Activated B cell treated with CpG ODN at 0.5 μM for 24 hours (primary cell): ENCODE measurements at regions of chr11 and their contacts with region 1.

Region 1: DNA sequence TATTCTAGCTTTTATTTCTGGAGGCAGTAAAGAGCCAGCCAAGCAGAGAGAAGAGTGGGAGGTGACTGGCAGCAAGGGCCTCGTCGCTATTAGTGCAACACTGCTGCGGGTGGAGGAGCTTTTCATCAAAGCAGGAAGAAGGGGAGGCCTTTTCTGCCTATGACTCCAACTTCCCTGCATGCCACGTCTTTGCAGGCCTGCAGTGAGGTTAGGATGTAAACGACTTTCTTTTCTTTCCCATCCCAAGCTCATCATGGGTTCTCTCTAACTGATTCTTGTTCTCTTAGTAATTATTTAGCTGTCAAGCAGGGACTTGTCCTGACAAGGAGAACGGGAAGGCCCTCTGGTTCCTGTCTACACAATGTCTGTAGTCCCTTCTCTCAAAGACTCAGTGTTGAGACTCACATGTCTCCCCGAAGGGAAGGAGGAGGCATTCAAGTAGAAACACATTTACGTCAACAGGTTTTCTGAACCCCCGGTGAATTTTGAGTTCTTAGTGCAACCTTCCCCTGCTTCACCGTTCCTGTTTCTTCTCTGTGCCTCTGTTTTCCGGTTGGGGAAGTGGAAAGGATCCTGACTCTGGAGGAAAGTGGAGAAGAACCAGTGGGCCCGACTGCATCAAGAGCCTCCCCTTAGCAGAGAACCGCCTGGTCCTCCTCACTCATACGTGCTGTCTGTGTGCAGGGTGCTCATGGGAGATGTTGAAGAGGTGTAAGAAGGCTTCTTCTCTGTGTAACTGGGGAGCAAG is 56.9 kb downstream of the PACS1 start:
- DNase-seq: peak; percentile 35
- ATAC-seq: peak; percentile 80
- H3K4me3 Mint-ChIP-seq: peak overlapping the region; percentile 84
- H3K27ac Mint-ChIP-seq: peak overlapping the region; percentile 98
- H3K4me1 Mint-ChIP-seq: peaks cover 89% of the 10 kb centered on the region
- H3K27me3 Mint-ChIP-seq: no peaks in the 10 kb centered on the region
- CTCF ChIP-seq: no peak

Region 2: DNA sequence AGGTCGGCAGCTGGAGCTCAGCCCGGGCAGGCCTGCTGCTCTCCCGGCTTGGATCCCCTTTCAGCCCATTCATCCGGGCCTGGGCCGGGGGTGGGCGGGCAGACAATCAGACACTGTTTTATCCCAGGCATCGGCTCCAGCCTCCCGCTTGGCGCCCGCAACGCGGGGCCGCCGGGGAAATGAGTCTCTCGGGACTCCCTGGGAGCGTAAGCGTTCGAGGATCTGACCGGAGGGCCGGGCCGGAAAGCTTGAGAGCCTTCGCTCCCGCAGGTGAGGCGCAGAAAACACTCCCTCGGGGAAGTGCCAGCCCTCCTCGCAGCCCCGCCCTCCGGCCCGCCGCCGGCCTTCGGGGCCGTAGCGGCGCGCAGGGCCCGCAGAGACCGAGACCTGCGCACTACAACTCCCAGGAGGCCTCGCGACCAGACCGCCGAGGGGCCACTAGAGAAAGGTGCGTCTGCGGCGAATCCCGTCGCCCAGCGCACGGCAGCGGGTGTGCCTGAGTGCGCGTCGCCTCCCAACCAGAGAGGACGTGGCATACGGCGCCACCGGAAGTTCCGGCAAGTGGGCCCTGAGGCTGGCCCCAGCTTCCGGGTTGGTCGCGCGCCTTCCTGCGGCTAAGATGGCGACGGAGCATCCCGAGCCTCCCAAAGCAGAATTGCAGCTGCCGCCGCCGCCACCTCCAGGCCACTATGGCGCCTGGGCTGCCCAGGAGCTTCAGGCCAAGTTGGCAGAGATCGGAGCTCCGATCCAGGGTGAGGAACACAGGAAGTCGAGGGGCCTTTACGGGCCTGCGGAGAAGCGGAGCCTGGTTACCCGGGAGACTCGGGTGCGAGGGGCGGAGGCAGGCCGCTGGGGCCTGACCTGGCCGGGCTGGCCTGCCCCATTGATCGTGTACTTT is 75.0 kb before region 1 on chr11 and contains the start of gene SF3B2:
- CTCF ChIA-PET with region 1: no interaction called
- POLR2A ChIA-PET with region 1: interaction called, 10 read pairs
- intact Hi-C with region 1: no loop called
- DNase-seq: peak; percentile 91
- ATAC-seq: peak; percentile 97
- H3K4me3 Mint-ChIP-seq: peak within 1 kb of the TSS; percentile 99
- H3K27ac Mint-ChIP-seq: peak within 1 kb of the TSS; percentile 96
- H3K4me1 Mint-ChIP-seq: peaks cover 27% of the 10 kb centered on the region
- H3K27me3 Mint-ChIP-seq: peaks cover 8% of the 10 kb centered on the region
- CTCF ChIP-seq: no peak
- total RNA-seq, gene SF3B2: 198 and 219 TPM in 2 replicates

Region 3: DNA sequence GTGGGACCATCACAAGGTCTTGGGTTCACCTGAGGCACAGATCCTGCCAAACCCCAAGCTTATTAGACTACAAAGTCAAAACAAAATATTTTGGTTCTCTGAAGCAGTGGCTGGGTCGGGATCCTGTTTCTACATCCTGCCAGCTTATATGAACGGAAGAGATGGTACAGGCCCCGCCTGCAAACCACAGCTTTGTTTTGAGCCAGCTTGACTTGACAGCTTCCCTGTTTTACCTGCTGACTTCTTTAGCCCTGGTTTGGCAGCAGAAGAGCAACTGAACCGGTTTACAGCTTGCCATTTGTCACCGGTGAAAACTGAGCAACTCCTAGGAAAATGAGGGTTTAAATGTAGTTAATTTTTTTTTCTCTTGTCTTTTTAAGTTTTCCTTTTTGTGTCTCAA is 45.5 kb before region 1 on chr11:
- CTCF ChIA-PET with region 1: interaction called, 13 read pairs
- POLR2A ChIA-PET with region 1: interaction called, 23 read pairs
- intact Hi-C with region 1: loop called (anchors 1 kb)
- DNase-seq: peak; percentile 50
- ATAC-seq: peak; percentile 90
- H3K4me3 Mint-ChIP-seq: peak overlapping the region; percentile 80
- H3K27ac Mint-ChIP-seq: peak overlapping the region; percentile 98
- H3K4me1 Mint-ChIP-seq: peaks cover 94% of the 10 kb centered on the region
- H3K27me3 Mint-ChIP-seq: no peaks in the 10 kb centered on the region
- CTCF ChIP-seq: no peak

Region 4: DNA sequence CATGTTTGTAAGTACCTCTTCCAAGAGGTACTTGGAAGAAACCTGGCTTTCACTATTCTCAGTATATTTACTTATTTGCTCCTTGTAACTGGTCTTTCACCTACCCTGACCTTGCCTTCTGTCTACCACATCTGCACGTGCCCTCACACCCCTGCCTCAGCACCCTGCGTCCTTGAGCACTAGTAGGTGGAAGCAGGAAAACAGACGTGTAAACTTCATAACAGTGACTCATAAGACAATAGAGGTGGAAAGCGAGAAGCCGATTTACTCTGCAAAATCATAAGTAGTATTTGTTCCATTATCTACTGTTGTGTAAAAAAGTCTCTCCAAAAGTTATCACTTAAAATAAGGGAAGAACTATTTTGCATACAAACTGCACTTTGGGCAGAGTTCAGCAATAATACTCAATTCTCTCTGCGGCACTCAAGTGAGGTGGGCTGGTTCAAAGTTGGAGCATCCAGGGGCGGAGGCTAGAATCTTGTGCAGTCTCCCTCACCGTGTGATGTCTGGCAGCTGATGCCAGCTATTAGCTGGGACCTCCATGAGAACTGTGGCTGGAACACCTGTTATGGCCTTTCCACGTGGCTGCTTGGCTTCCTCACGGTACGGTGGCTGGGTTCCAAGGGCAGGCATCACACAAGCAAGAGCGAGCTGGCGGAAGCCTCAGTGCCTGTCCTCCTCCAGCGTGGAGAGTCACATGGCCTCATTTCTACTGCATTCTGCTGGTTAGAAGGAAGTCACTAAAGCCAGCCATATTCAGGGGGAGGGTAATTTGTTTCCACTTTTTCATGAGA is 26.5 kb before region 1 on chr11:
- CTCF ChIA-PET with region 1: no interaction called
- POLR2A ChIA-PET with region 1: interaction called, 11 read pairs
- intact Hi-C with region 1: no loop called
- DNase-seq: peak; percentile 41
- ATAC-seq: peak; percentile 89
- H3K4me3 Mint-ChIP-seq: peak overlapping the region; percentile 70
- H3K27ac Mint-ChIP-seq: peak overlapping the region; percentile 88
- H3K4me1 Mint-ChIP-seq: peaks cover 62% of the 10 kb centered on the region
- H3K27me3 Mint-ChIP-seq: no peaks in the 10 kb centered on the region
- CTCF ChIP-seq: no peak

Region 5: DNA sequence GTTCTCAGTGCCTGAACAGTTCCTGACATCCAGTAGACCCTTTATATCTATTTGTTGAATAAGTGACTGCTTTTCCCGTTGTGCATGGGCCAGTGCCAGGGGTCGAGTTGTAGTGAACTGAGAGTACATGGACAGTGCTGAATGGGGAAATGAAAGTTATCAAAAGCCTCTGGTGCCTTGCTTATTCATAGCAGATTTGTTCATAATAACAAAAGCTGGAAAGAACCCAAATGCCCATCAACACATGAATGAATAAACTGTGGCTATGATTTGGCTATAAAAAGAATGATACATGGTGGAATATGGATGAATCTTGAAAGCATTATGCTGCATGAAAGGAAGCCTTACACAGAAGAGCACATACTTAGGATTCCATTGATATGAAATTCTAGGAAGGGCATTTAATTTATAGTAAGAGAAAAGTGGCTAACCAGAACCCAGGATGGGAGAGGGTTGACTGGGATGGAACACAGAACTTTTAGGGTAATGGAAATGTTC is 14.3 kb before region 1 on chr11:
- CTCF ChIA-PET with region 1: interaction called, 3 read pairs
- POLR2A ChIA-PET with region 1: interaction called, 34 read pairs
- intact Hi-C with region 1: loop called (anchors 1 kb)
- DNase-seq: no peak
- ATAC-seq: peak; percentile 53
- H3K4me3 Mint-ChIP-seq: peak overlapping the region; percentile 58
- H3K27ac Mint-ChIP-seq: peak overlapping the region; percentile 83
- H3K4me1 Mint-ChIP-seq: peaks cover 96% of the 10 kb centered on the region
- H3K27me3 Mint-ChIP-seq: no peaks in the 10 kb centered on the region
- CTCF ChIP-seq: no peak

Region 6: GRCh38 chr11:66626926-66627325 is 499.9 kb after region 1 on chr11:
- CTCF ChIA-PET with region 1: no interaction called
- POLR2A ChIA-PET with region 1: no interaction called
- intact Hi-C with region 1: no loop called
- DNase-seq: no peak
- ATAC-seq: no peak
- H3K4me3 Mint-ChIP-seq: no peak overlapping the region
- H3K27ac Mint-ChIP-seq: no peak overlapping the region
- H3K4me1 Mint-ChIP-seq: peaks cover 43% of the 10 kb centered on the region
- H3K27me3 Mint-ChIP-seq: no peaks in the 10 kb centered on the region
- CTCF ChIP-seq: no peak